ENCODE measurements at regions of chr16 and their contacts with region 1.

Region 1: DNA sequence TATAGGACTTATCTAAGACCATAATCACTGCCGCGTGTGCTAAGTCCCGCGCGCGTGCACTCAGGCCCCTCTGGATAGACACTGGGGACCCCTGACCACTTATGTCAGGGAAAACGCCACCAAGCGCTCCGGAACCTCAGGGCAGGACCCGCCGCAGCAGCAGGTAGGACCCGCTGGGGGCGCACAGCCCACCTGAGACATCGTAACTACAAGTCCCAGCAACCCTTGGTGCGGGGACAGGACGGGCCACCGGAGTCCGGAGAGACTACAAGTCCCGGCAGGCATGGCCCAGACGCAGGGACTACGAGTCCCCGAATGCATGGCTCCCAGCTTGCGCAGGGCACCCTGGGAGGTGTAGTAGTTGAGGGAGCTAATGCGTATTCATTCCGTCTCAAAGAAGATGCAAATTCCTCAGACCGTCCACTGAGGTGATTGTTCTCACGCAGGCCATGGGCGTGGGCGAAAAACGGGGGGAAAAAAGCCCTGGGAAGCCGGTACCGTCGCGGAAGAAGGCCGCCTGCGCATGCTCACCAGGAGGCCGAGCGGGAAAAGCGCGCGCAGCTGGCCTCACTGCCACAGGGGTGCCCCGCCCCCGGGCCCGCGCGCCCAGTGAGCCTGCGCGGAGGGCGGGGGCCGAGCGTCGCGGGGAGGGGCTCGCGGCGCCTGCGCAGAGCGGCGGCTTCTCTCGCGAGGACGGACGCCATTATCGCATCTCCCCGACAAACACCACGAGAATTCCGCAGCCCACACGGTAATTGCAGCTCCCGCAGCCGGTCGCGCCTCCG is at the start of gene BANP:
- DNase-seq: peak; percentile 96 to 99
- H3K4me3 ChIP-seq: peak within 1 kb of the TSS; percentile 95 to 99
- H3K27ac ChIP-seq: peak within 1 kb of the TSS; percentile 97 to 98
- H3K4me1 ChIP-seq: peaks cover 0 to 9% of the 10 kb centered on the region in 2 donors
- H3K27me3 ChIP-seq: no peaks in the 10 kb centered on the region
- CTCF ChIP-seq: peak; percentile 14 to 39 (median 36)
- total RNA-seq, gene BANP: 23.4 TPM

Region 2: DNA sequence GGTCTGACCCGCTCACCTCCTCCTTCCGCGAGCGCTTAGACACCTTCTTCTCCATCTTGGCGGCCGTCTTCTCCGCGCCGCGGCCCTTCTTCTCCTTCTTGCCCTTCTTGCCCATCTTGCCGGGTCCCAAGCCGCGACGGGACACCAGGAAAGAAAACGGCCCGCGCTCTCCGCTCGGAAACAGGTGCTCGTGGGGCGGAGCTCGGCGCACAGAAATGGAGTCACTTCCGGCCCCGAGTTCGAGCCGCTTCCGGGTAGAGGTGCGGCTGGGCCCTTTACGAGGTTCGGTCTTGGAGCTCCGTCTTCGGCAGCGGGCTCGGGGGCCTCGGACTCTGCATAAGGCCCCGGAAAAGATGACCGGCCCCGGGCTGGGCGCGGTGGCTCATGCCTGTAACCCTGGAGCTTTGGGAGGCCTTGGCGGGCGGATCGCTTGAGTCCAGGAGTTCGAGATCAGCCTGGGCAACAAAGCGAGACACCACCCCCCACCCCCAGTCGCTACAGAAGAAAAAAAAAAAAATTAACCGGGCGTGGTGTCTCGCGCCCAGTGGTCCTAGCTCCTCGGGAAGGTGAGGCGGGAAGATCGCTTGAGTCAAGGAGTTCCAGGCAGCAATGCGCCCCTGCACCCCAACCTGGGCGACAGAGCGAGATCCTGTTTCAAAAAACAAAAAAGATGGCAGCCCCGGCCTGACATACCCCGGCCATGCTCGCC is 185.0 kb before region 1 on chr16 and contains the start of gene KLHDC4:
- intact Hi-C with region 1: loop called (anchors 2 kb)
- DNase-seq: peak; percentile 57 to 94
- H3K4me3 ChIP-seq: peak within 1 kb of the TSS; percentile 72 to 81
- H3K27ac ChIP-seq: peak within 1 kb of the TSS; percentile 81 to 86
- H3K4me1 ChIP-seq: peaks cover 8 to 9% of the 10 kb centered on the region in 2 donors
- H3K27me3 ChIP-seq: no peaks in the 10 kb centered on the region
- CTCF ChIP-seq: no peak
- total RNA-seq, gene KLHDC4: 38.4 TPM

Region 3: GRCh38 chr16:87918866-87919680 is 31.9 kb before region 1 on chr16:
- intact Hi-C with region 1: loop called (anchors 1 kb)
- DNase-seq: no peak
- H3K4me3 ChIP-seq: peak overlapping the region; percentile 16 to 33
- H3K27ac ChIP-seq: peak overlapping the region; percentile 76 to 77
- H3K4me1 ChIP-seq: peaks cover 0 to 12% of the 10 kb centered on the region in 2 donors
- H3K27me3 ChIP-seq: no peaks in the 10 kb centered on the region
- CTCF ChIP-seq: no peak

Measured in ascending aorta (tissue), 2 donors.